ENCODE measurements at regions of chr19 and their contacts with region 1.

Region 1: GRCh38 chr19:10510301-10510802 is 6.9 kb downstream of the S1PR5 start:
- DNase-seq: peak; percentile 45
- H3K27ac ChIP-seq: peak overlapping the region; percentile 93
- CTCF ChIP-seq: peak; percentile 77

Region 2: DNA sequence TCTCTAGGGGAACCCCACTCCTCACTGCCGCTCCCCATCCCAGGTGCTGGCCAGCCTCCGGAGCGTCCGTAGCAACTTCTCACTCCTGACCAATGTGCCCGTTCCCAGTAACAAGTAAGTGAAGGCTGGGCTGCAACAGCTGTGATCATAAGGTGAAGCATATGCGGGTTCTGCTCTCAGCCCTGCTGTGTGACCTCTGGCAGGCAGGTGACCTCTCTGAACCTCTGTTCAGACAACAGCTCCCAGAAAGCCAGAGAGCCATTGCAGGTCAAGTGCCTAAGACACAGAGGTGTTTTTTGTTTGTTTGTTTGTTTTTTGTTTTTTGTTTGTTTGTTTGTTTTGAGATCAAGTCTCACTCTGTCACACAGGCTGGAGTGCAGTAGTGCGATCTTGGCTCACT is 61.3 kb before region 1 on chr19:
- CTCF ChIA-PET with region 1: no interaction called
- POLR2A ChIA-PET with region 1: no interaction called
- DNase-seq: no peak
- H3K27ac ChIP-seq: no peak overlapping the region
- CTCF ChIP-seq: no peak

Region 3: GRCh38 chr19:10543420-10544241 is 33.3 kb after region 1 on chr19 and contains the start of gene ATG4D:
- CTCF ChIA-PET with region 1: no interaction called
- POLR2A ChIA-PET with region 1: interaction called, 10 read pairs
- DNase-seq: peak; percentile 97
- H3K27ac ChIP-seq: peak within 1 kb of the TSS; percentile 82
- CTCF ChIP-seq: no peak